Left ventricle myocardium inferior (tissue), 1 donor: ENCODE measurements at regions of chr1 and their contacts with region 1.

Region 1: DNA sequence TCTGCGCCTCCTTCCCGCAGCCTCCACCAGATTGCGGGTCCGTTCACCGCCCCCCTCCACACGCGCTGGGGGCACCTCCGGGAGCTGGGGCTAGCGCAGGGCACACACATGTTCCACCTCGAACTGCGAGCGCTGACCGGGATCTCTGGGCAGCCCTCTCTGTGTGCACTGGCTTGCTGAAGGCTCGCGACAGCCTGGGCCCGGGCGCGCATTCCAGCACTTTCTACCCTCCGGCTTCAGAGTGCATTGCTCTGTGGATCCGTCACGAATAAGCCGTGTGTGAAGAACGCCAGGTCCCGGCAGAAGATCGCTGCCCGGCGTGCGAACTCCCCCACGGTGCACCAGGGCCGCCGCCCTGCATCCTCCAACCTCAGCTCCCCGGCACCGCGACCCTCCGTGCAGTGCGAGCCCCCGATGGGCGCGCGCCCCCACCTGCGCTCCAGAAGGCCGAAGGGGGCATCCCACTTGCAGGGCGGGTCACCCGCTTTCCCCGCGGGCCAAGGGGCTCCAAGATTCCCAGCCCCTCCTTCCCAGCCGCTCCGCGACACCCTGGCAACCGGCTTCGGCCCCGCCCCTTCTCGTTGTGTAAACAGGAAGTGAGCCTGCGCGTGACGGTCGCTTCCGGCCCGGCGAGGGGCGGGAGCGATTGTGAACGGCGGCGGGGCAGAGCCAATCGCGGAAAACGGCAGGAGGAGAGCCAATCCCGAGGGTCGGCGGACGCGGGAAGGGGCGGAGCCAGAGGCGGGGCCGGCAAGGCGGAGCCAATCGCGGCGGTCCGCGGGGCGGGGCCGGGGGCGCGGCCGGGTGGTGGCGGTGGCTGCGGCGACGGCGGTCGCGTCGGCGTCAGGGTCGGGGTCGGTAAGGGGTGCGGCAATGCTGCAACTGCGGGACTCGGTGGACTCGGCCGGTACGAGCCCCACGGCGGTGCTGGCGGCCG is at the start of gene TPRG1L:
- DNase-seq: peak; percentile 99
- H3K4me3 ChIP-seq: peak within 1 kb of the TSS; percentile 99
- H3K27ac ChIP-seq: peak within 1 kb of the TSS; percentile 91
- H3K4me1 ChIP-seq: peaks cover 45% of the 10 kb centered on the region
- H3K27me3 ChIP-seq: no peaks in the 10 kb centered on the region
- CTCF ChIP-seq: no peak
- total RNA-seq, gene TPRG1L: 54.0 TPM

Region 2: DNA sequence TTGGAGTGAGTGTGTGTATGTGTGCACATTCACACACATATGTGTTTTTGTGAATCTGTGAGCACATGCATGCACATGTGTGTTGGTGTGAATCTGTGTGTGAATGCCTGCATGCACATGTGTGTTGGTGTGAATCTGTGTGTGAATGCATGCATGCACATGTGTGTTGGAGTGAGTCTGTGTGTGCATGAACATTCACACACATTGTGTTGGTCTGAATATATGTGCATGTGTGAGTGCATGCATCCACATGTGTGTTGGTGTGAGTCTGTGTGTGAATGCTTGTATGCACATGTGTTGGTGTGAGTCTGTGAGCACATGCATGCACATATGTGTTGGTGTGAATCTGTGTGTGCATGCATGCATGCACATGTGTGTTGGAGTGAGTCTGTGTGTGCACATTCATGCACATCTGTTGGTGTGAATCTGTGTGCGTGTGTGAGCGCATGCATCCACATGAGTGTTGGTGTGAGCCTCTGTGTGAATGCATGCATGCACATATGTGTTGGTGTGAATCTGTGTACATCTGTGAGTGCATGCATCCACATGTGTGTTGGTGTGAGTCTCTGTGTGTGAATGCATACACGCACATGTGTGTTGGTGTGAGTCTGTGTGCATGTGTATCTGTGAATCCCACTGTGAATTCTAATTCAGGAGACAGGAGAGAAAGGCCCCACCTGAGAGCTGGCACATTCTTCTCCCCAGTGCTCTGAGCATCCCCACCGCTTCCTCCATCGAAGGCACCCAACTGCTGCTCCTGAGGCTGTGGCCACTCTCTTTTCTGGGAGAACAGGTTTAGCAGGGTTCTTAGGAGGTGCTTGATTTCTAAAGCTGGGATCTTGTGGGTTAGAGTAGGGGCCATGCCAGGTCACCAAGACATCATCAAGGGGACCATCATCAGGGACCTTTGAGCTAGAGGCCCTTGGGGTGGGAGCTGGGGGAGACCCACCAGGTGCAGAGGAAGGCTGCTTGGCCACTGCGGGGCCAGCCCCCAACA is 287.5 kb before region 1 on chr1:
- intact Hi-C with region 1: no loop called
- DNase-seq: no peak
- H3K4me3 ChIP-seq: no peak overlapping the region
- H3K27ac ChIP-seq: no peak overlapping the region
- H3K4me1 ChIP-seq: peaks cover 54% of the 10 kb centered on the region
- H3K27me3 ChIP-seq: peaks cover 16% of the 10 kb centered on the region
- CTCF ChIP-seq: no peak

Region 3: GRCh38 chr1:3564921-3565827 is 59.3 kb before region 1 on chr1:
- intact Hi-C with region 1: loop called (anchors 5 kb)
- DNase-seq: no peak
- H3K4me3 ChIP-seq: no peak overlapping the region
- H3K27ac ChIP-seq: no peak overlapping the region
- H3K4me1 ChIP-seq: peaks cover 5% of the 10 kb centered on the region
- H3K27me3 ChIP-seq: peaks cover 21% of the 10 kb centered on the region
- CTCF ChIP-seq: peak; percentile 93